ENCODE measurements at regions of chr16 and their contacts with region 1.

Region 1: GRCh38 chr16:4957720-4958509 is at the start of gene SEC14L5:
- DNase-seq: peak; percentile 99
- total RNA-seq, gene SEC14L5: 0.70 TPM

Region 2: DNA sequence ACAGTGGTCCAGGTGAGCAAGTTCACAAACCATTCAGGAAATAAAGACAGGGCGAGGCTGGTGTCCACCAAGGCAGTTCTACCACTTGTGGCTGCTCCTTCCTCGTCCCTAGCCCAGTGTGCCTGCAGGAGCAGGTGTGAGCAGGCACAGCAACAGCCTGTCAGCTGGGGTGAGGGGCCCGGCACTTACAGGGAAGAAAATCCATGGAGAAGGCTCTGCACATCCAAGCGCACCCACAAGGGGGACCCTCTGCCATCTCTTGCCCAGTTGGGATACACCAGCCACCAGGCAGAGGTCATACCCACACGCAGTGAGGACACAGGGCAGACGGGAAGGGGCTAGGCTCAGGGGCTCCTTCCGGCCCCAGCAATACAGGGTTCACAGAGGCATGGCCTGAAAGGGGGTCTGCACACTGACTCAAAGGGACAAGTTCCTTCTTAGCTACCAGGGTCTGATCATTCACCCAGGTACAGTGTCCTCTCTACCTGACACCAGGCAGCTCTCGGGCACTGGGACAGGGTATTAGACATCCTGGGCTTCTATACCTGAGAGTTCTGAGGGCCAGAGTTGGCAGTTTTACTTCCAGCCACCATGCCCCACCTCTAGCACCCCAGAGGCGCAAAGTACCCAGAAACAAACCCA is 446.4 kb before region 1 on chr16:
- intact Hi-C with region 1: loop called (anchors 5 kb)
- DNase-seq: no peak

Region 3: DNA sequence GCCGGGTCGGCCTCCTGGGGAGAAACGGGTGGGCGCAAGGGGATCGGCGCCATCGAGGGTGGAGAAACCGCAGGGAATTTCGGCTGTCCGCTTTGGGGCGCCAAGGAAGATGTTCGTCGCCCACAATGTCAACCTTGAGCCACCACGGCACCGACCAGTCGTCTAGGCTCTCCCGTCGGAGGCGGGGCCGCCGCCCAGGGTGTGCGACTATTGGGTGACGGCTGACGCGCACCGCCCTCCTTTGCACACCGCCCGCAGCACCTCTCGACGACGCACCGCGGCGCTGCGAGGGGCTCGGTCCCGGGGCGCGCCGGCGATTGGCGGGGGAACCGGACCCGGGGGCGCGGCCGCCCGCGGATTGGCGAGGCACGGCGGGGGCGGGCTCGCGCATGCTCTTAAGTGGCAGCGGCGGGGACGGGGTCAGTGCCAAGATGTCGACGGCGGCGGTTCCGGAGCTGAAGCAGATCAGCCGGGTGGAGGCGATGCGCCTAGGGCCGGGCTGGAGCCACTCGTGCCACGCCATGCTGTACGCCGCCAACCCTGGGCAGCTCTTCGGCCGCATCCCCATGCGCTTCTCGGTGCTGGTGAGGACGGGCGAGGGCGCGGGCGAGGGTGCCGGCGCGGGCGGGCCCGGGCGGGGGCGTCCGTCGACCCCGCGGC is 264.5 kb before region 1 on chr16 and contains the start of gene NUDT16L1:
- intact Hi-C with region 1: loop called (anchors 5 kb)
- DNase-seq: peak; percentile 98
- total RNA-seq, gene NUDT16L1: 43.7 TPM

Region 4: GRCh38 chr16:4766874-4767628 is 190.9 kb before region 1 on chr16 and contains the start of gene ZNF500:
- intact Hi-C with region 1: loop called (anchors 10 kb)
- DNase-seq: peak; percentile 99
- total RNA-seq, gene ZNF500: 7.2 TPM

Region 5: DNA sequence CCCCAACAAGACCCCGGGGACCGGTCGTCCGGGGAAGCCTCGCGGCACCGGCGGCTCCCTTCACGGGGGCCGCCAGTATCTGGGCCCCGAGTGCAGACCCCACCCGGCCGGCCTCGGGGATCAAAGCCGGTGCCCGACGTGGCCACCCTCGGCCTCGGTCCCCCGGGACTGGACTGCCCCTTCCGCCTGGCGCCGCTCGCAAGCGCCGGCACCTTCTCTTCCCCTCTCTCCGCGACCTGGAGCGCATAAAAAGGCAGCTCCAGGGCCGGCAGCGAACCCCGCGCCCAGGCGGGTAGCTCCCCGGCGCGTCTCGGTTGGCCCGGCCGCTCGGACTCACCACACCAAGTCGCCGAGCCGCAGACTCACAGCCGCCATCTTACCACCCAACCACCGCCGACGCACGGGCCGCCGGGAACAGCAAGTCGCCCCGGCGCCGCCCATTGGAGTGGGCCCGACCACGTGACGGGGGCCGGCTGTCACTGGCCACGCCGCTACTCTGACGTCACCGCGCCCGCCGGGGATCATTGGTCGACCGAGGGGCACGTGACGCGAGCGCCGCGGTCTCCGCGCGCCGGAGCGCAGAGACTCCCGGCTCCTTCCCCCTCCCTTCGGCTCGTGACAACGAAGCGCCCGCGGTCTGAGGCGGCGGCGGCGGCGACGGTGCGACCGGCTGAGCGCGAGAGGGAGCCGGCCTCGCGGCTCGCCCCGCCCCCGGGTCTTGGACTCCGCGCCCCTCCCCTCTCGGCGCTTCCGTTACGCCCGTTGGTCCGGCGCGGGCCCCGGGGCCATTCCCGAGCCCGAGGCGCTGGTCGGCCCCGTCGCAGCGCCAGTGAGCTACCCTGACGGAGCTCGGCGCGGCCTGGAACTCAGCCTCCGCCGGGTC is 110.8 kb before region 1 on chr16 and contains the starts of genes GLYR1 and UBN1:
- intact Hi-C with region 1: loop called (anchors 5 kb)
- DNase-seq: peak; percentile 100
- total RNA-seq, gene GLYR1: 64.9 TPM
- total RNA-seq, gene UBN1: 23.6 TPM

Region 6: DNA sequence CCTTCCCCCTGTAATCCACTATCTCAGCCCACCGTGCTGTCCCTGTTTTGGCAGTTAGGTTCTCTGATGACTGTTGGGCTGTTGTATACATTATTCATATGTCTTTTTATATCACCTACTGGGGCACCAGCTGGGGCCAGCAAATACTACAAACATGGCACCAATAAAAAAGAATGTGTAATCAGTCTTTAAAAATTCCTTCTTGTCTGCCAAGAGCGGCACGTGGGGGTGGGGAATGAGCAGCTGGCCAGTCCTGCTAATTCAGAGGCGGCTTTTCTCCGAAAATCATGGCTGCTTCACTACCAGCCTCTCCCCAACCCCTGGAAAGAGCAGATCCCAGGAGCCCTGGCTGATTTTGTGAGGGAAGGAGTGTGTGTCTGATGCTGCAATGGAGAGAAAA is 217.4 kb after region 1 on chr16:
- intact Hi-C with region 1: no loop called
- DNase-seq: no peak